Prostate gland (tissue), 2 donors: ENCODE measurements at regions of chr4 and their contacts with region 1.

Region 1: DNA sequence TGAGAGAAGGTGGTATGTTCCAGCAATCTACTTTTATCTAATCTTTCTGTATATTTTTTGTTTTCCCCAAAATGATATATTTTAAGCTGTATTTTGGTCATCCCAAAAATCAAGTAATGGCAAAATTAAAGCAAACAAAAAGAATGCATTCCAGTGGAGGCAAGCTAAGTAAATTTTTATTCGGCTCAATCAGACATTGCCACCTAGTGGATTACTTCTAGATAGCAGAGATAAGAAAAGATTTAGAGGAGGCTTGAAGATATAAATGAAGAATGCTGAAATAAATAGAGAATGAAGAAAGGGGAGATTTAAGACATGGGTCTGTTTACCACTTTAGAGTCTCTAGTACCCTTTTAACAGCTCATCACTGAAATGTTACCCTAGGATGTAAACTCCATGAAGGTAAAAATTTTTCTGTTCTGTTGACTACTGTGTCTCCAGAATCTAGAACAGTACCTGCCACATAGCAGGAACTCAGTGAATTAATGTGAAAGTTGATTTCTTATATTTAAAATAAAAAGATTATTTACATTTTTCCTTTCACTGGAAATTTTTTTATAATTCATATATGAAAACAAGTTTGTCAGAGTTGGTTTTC is 110.9 kb upstream of the ANK2 start:
- DNase-seq: no peak
- H3K4me3 ChIP-seq: no peak overlapping the region
- H3K27ac ChIP-seq: no peak overlapping the region
- H3K4me1 ChIP-seq: no peaks in the 10 kb centered on the region
- H3K27me3 ChIP-seq: no peaks in the 10 kb centered on the region
- CTCF ChIP-seq: peak in 3 of 4 experiments; percentile 46 to 64 (median 58)
- POLR2A ChIP-seq: no peak

Region 2: GRCh38 chr4:112765317-112765975 is 173.1 kb before region 1 on chr4:
- intact Hi-C with region 1: loop called (anchors 5 kb)
- DNase-seq: no peak
- H3K4me3 ChIP-seq: no peak overlapping the region
- H3K27ac ChIP-seq: no peak overlapping the region
- H3K4me1 ChIP-seq: no peaks in the 10 kb centered on the region
- H3K27me3 ChIP-seq: no peaks in the 10 kb centered on the region
- CTCF ChIP-seq: peak in 1 of 4 experiments; percentile 10
- POLR2A ChIP-seq: no peak